CD4-positive, alpha-beta memory T cell (primary cell): ENCODE measurements at regions of chr6 and their contacts with region 1.

Region 1: GRCh38 chr6:90080876-90081481 is 186.7 kb downstream of the GJA10 start:
- DNase-seq: peak; percentile 76 to 90 (median 84)
- H3K4me3 ChIP-seq: peak overlapping the region; percentile 24 to 54
- H3K4me3 Mint-ChIP-seq: peak overlapping the region; percentile 80 to 98 (median 96)
- H3K27ac ChIP-seq: peak overlapping the region; percentile 64
- H3K27ac Mint-ChIP-seq: peak overlapping the region; percentile 91 to 99 (median 98)
- H3K4me1 ChIP-seq: peaks cover 75% of the 10 kb centered on the region
- H3K4me1 Mint-ChIP-seq: peaks cover 64 to 94% (median 79%) of the 10 kb centered on the region in 4 donors
- H3K27me3 ChIP-seq: no peaks in the 10 kb centered on the region
- H3K27me3 Mint-ChIP-seq: no peaks in the 10 kb centered on the region

Region 2: GRCh38 chr6:89977808-89978748 is 102.9 kb before region 1 on chr6:
- CTCF ChIA-PET with region 1: no interaction called
- POLR2A ChIA-PET with region 1: no interaction called
- intact Hi-C with region 1: loop called (anchors 1 kb)
- DNase-seq: no peak
- H3K4me3 ChIP-seq: no peak overlapping the region
- H3K4me3 Mint-ChIP-seq: no peak overlapping the region
- H3K27ac ChIP-seq: no peak overlapping the region
- H3K27ac Mint-ChIP-seq: no peak overlapping the region
- H3K4me1 ChIP-seq: peaks cover 7% of the 10 kb centered on the region
- H3K4me1 Mint-ChIP-seq: peaks cover 11 to 24% (median 17%) of the 10 kb centered on the region in 4 donors
- H3K27me3 ChIP-seq: no peaks in the 10 kb centered on the region
- H3K27me3 Mint-ChIP-seq: no peaks in the 10 kb centered on the region

Region 3: GRCh38 chr6:90107771-90108282 is 26.8 kb after region 1 on chr6:
- CTCF ChIA-PET with region 1: interaction called, 4 read pairs
- POLR2A ChIA-PET with region 1: interaction called, 7 read pairs
- intact Hi-C with region 1: loop called (anchors 2 kb)
- DNase-seq: peak in 1 of 5 donors; percentile 21
- H3K4me3 ChIP-seq: no peak overlapping the region
- H3K4me3 Mint-ChIP-seq: peak overlapping the region in 5 of 8 donors; percentile 35 to 74 (median 60)
- H3K27ac ChIP-seq: no peak overlapping the region
- H3K27ac Mint-ChIP-seq: peak overlapping the region in 4 of 7 donors; percentile 15 to 67 (median 22)
- H3K4me1 ChIP-seq: peaks cover 78% of the 10 kb centered on the region
- H3K4me1 Mint-ChIP-seq: peaks cover 57 to 96% (median 73%) of the 10 kb centered on the region in 4 donors
- H3K27me3 ChIP-seq: no peaks in the 10 kb centered on the region
- H3K27me3 Mint-ChIP-seq: no peaks in the 10 kb centered on the region

Region 4: DNA sequence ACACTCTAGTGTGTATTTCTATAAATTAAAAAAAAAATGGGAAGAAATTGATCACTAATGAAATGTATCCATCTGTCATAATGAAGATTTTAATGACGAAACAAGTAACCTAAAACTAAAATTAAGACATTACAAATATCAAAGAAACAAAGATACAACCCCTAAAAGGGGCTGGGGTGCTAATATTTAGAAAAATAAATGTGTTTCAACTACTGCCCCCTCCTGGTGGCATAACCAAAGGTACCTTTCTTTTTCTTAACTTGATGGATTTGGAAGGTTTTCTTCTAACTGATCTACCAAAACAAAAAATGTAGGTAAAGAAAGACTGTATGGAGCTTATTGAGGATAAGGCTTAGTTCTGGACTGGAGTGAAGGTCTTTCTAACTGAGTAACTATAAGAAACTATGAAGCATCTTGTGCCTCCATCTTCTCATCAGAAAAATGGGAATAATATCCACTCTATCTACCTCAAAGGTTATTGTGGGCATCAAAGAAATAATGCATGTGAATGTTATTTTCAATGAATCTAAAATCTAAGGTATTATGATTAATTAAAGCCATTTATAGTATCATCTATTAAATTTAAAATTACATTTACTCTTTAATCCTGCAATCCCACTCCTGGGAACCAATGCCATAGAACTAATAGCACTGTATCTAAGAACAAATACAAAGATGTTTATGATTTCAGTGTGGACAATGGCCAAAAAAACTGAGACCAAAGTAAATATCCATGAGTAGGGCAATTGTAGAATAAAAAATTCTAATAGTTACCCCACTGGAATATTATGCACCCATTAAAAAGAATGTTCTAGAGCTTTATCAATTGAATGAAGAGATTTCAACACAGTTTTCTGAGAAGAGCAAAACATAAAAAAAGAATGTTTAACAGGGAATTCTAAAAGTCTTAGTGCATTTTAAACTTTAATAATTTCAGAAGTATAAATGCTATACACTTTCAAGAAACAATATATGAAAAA is 98.5 kb after region 1 on chr6:
- CTCF ChIA-PET with region 1: interaction called, 11 read pairs
- POLR2A ChIA-PET with region 1: interaction called, 5 read pairs
- intact Hi-C with region 1: loop called (anchors 2 kb)
- DNase-seq: peak in 4 of 5 donors; percentile 27 to 36 (median 33)
- H3K4me3 ChIP-seq: no peak overlapping the region
- H3K4me3 Mint-ChIP-seq: no peak overlapping the region
- H3K27ac ChIP-seq: no peak overlapping the region
- H3K27ac Mint-ChIP-seq: peak overlapping the region in 3 of 7 donors; percentile 35 to 72 (median 62)
- H3K4me1 ChIP-seq: peaks cover 46% of the 10 kb centered on the region
- H3K4me1 Mint-ChIP-seq: peaks cover 28 to 75% (median 51%) of the 10 kb centered on the region in 4 donors
- H3K27me3 ChIP-seq: no peaks in the 10 kb centered on the region
- H3K27me3 Mint-ChIP-seq: no peaks in the 10 kb centered on the region

Region 5: DNA sequence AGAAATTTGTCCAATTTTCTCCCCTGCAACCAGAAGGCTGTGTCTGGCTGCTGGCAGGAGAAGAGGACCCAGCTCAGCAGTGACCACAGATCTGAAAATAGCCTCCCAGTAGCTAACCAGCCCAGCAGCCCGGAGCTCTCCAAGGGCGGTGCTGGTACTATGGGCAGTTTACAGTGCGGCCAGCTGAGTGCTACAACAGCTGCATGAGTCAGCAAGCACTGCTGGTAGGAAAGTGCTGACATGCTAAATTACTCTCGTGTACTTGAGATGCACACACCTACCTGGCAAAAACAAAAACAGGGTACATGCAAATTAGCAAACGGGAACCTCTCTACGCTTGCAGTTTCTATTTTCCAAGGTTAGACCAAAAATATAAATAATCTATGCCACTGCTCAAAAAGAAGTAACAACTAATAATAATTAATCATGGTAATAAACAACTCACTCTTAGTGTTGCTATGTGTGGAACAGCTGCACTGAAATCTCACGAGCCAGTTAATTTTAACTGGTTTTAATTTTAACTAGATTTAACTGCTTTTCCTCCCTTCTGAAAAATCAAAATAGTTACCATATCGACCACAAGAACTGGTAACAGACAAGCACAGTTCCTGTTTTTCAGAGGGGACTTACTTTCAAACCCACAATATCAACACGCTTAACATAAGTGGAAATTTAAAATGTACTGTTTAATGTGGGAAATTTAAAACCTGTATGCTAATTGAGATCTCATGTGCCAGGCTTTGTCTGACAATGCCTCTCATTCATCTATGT is 204.8 kb after region 1 on chr6:
- CTCF ChIA-PET with region 1: no interaction called
- POLR2A ChIA-PET with region 1: interaction called, 3 read pairs
- intact Hi-C with region 1: loop called (anchors 1 kb)
- DNase-seq: peak; percentile 68 to 83 (median 76)
- H3K4me3 ChIP-seq: peak overlapping the region; percentile 1 to 58
- H3K4me3 Mint-ChIP-seq: peak overlapping the region; percentile 80 to 95 (median 86)
- H3K27ac ChIP-seq: peak overlapping the region; percentile 46
- H3K27ac Mint-ChIP-seq: peak overlapping the region; percentile 77 to 98 (median 89)
- H3K4me1 ChIP-seq: peaks cover 32% of the 10 kb centered on the region
- H3K4me1 Mint-ChIP-seq: peaks cover 47 to 89% (median 68%) of the 10 kb centered on the region in 4 donors
- H3K27me3 ChIP-seq: no peaks in the 10 kb centered on the region
- H3K27me3 Mint-ChIP-seq: peaks cover 0 to 2% of the 10 kb centered on the region in 2 donors